Naive thymus-derived CD4-positive, alpha-beta T cell (primary cell): ENCODE measurements at regions of chr19 and their contacts with region 1.

Region 1: GRCh38 chr19:6503407-6504201 is 1.5 kb upstream of the TUBB4A start:
- DNase-seq: no peak
- ATAC-seq: no peak
- H3K4me3 ChIP-seq: no peak overlapping the region
- H3K4me3 Mint-ChIP-seq: peak overlapping the region in 9 of 10 donors; percentile 7 to 93 (median 66)
- H3K27ac ChIP-seq: no peak overlapping the region
- H3K27ac Mint-ChIP-seq: peak overlapping the region in 2 of 9 donors; percentile 27 to 71
- H3K4me1 ChIP-seq: peaks cover 7 to 8% of the 10 kb centered on the region in 2 donors
- H3K4me1 Mint-ChIP-seq: peaks cover 6 to 22% (median 19%) of the 10 kb centered on the region in 7 donors
- H3K27me3 ChIP-seq: no peaks in the 10 kb centered on the region
- H3K27me3 Mint-ChIP-seq: peaks cover 0 to 26% (median 0%) of the 10 kb centered on the region in 5 donors

Region 2: GRCh38 chr19:6279931-6280591 is 223.5 kb before region 1 on chr19 and contains the start of gene MLLT1:
- CTCF ChIA-PET with region 1: no interaction called
- POLR2A ChIA-PET with region 1: no interaction called
- intact Hi-C with region 1: loop called in 1 of 2 experiments (anchors 1 kb)
- DNase-seq: peak; percentile 88 to 98 (median 90)
- ATAC-seq: peak; percentile 96
- H3K4me3 ChIP-seq: peak within 1 kb of the TSS; percentile 54
- H3K4me3 Mint-ChIP-seq: peak within 1 kb of the TSS; percentile 85 to 97 (median 92)
- H3K27ac ChIP-seq: peak within 1 kb of the TSS; percentile 78
- H3K27ac Mint-ChIP-seq: peak within 1 kb of the TSS; percentile 87 to 95 (median 93)
- H3K4me1 ChIP-seq: peaks cover 3 to 20% of the 10 kb centered on the region in 2 donors
- H3K4me1 Mint-ChIP-seq: peaks cover 30 to 42% (median 39%) of the 10 kb centered on the region in 7 donors
- H3K27me3 ChIP-seq: no peaks in the 10 kb centered on the region
- H3K27me3 Mint-ChIP-seq: peaks cover 0 to 6% (median 0%) of the 10 kb centered on the region in 5 donors
- total RNA-seq, gene MLLT1: 33.3 to 47.5 (median 39.0) TPM

Region 3: GRCh38 chr19:6393074-6393983 is 110.3 kb before region 1 on chr19 and contains the start of gene GTF2F1:
- CTCF ChIA-PET with region 1: no interaction called
- POLR2A ChIA-PET with region 1: no interaction called
- intact Hi-C with region 1: loop called in 1 of 2 experiments (anchors 2 kb)
- DNase-seq: peak; percentile 87 to 96 (median 92)
- ATAC-seq: peak; percentile 88
- H3K4me3 ChIP-seq: peak within 1 kb of the TSS; percentile 81
- H3K4me3 Mint-ChIP-seq: peak within 1 kb of the TSS; percentile 90 to 95 (median 94)
- H3K27ac ChIP-seq: peak within 1 kb of the TSS; percentile 98
- H3K27ac Mint-ChIP-seq: peak within 1 kb of the TSS; percentile 95 to 99 (median 97)
- H3K4me1 ChIP-seq: peaks cover 8 to 12% of the 10 kb centered on the region in 2 donors
- H3K4me1 Mint-ChIP-seq: peaks cover 20 to 27% (median 25%) of the 10 kb centered on the region in 7 donors
- H3K27me3 ChIP-seq: no peaks in the 10 kb centered on the region
- H3K27me3 Mint-ChIP-seq: no peaks in the 10 kb centered on the region
- total RNA-seq, gene GTF2F1: 51.5 to 71.6 (median 61.3) TPM

Region 4: GRCh38 chr19:6450166-6450565 is 53.4 kb before region 1 on chr19:
- CTCF ChIA-PET with region 1: no interaction called
- POLR2A ChIA-PET with region 1: no interaction called
- intact Hi-C with region 1: no loop called
- DNase-seq: no peak
- ATAC-seq: no peak
- H3K4me3 ChIP-seq: no peak overlapping the region
- H3K4me3 Mint-ChIP-seq: no peak overlapping the region
- H3K27ac ChIP-seq: no peak overlapping the region
- H3K27ac Mint-ChIP-seq: peak overlapping the region in 1 of 9 donors; percentile 65
- H3K4me1 ChIP-seq: no peaks in the 10 kb centered on the region
- H3K4me1 Mint-ChIP-seq: peaks cover 0 to 6% (median 0%) of the 10 kb centered on the region in 7 donors
- H3K27me3 ChIP-seq: no peaks in the 10 kb centered on the region
- H3K27me3 Mint-ChIP-seq: no peaks in the 10 kb centered on the region

Region 5: GRCh38 chr19:6481541-6482342 is 21.9 kb before region 1 on chr19 and contains the start of gene DENND1C:
- CTCF ChIA-PET with region 1: interaction called, 3 read pairs
- POLR2A ChIA-PET with region 1: interaction called, 5 read pairs
- intact Hi-C with region 1: loop called in 1 of 2 experiments (anchors 2 kb)
- DNase-seq: peak; percentile 52 to 67 (median 67)
- ATAC-seq: peak; percentile 91
- H3K4me3 ChIP-seq: peak within 1 kb of the TSS; percentile 95
- H3K4me3 Mint-ChIP-seq: peak within 1 kb of the TSS; percentile 88 to 100 (median 96)
- H3K27ac ChIP-seq: peak within 1 kb of the TSS; percentile 94
- H3K27ac Mint-ChIP-seq: peak within 1 kb of the TSS; percentile 93 to 99 (median 96)
- H3K4me1 ChIP-seq: peaks cover 26 to 27% of the 10 kb centered on the region in 2 donors
- H3K4me1 Mint-ChIP-seq: peaks cover 30 to 46% (median 40%) of the 10 kb centered on the region in 7 donors
- H3K27me3 ChIP-seq: no peaks in the 10 kb centered on the region
- H3K27me3 Mint-ChIP-seq: no peaks in the 10 kb centered on the region
- total RNA-seq, gene DENND1C: 106 to 142 (median 118) TPM